ENCODE measurements at regions of chr11 and their contacts with region 1.

Region 1: GRCh38 chr11:19071255-19071654 is 10.7 kb upstream of the MRGPRX2 start:
- DNase-seq: peak; percentile 81 to 88 (median 86)
- ATAC-seq: peak; percentile 96
- H3K4me3 ChIP-seq: no peak overlapping the region
- H3K27ac ChIP-seq: no peak overlapping the region
- H3K4me1 ChIP-seq: no peaks in the 10 kb centered on the region; a peak in 1 of 5 replicates
- H3K27me3 ChIP-seq: no peaks in the 10 kb centered on the region
- CTCF ChIP-seq: peak; percentile 99 to 100 (median 99)
- EP300 ChIP-seq: no peak
- POLR2A ChIP-seq: no peak
- RAD21 ChIP-seq: peak; percentile 95 to 98

Region 2: DNA sequence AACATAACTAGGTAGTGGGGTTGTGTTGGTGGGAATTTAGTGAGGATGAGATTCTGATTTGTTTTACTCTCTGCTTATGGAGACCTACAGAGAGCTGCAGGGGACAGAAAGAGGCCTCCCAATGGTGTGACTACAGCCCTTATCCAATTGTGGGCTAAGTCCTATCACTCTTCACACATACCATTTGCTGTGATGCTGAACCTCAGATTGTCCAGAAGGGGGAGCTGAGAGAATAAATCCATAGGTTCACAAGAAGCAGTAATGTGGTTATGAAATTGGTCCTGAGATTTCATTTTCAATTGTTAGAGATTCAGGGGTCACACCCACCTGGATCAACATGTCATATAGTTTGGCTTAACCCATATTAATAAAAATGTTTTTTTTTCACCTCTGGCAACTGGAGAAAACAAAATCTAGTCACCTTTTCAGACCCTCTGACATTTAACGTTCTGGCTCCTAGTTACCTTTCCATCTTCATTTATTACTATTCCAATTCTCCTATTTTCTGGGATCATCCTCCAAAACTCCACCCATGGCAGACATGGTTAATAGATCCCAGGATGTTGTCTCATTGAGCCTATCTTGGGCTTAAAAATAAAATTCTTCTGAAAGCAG is 226.4 kb before region 1 on chr11:
- CTCF ChIA-PET with region 1: no interaction called
- POLR2A ChIA-PET with region 1: no interaction called
- in situ Hi-C with region 1: no loop called
- intact Hi-C with region 1: loop called (anchors 10 kb)
- DNase-seq: peak; percentile 32 to 48 (median 45)
- ATAC-seq: peak; percentile 93
- H3K4me3 ChIP-seq: no peak overlapping the region
- H3K27ac ChIP-seq: no peak overlapping the region
- H3K4me1 ChIP-seq: no peaks in the 10 kb centered on the region
- H3K27me3 ChIP-seq: no peaks in the 10 kb centered on the region
- CTCF ChIP-seq: peak; percentile 41 to 71 (median 66); a peak in 5 of 6 replicates
- EP300 ChIP-seq: no peak
- POLR2A ChIP-seq: no peak
- RAD21 ChIP-seq: peak; percentile 21 to 61; a peak in 3 of 4 replicates

Region 3: GRCh38 chr11:19040051-19040450 is 31.2 kb before region 1 on chr11:
- CTCF ChIA-PET with region 1: no interaction called
- POLR2A ChIA-PET with region 1: no interaction called
- in situ Hi-C with region 1: no loop called
- intact Hi-C with region 1: no loop called
- DNase-seq: no peak
- ATAC-seq: no peak
- H3K4me3 ChIP-seq: no peak overlapping the region
- H3K27ac ChIP-seq: no peak overlapping the region
- H3K4me1 ChIP-seq: no peaks in the 10 kb centered on the region
- H3K27me3 ChIP-seq: no peaks in the 10 kb centered on the region
- CTCF ChIP-seq: no peak
- EP300 ChIP-seq: no peak
- POLR2A ChIP-seq: no peak
- RAD21 ChIP-seq: no peak

Region 4: GRCh38 chr11:19173004-19173689 is 101.9 kb after region 1 on chr11:
- CTCF ChIA-PET with region 1: no interaction called
- POLR2A ChIA-PET with region 1: no interaction called
- in situ Hi-C with region 1: no loop called
- intact Hi-C with region 1: no loop called
- DNase-seq: peak in 2 of 4 experiments; percentile 35 to 54
- ATAC-seq: peak; percentile 76
- H3K4me3 ChIP-seq: no peak overlapping the region
- H3K27ac ChIP-seq: peak overlapping the region; percentile 19; the same call in 1 of the 3 replicates
- H3K4me1 ChIP-seq: peaks cover 0 to 20% of the 10 kb centered on the region in 2 experiments; a peak in 2 of 5 replicates
- H3K27me3 ChIP-seq: no peaks in the 10 kb centered on the region
- CTCF ChIP-seq: no peak
- EP300 ChIP-seq: no peak
- POLR2A ChIP-seq: no peak
- RAD21 ChIP-seq: 0 out of 4 replicates have a peak, but pooled peaks of 1 of the 2 experiments have one; percentile 6

Region 5: DNA sequence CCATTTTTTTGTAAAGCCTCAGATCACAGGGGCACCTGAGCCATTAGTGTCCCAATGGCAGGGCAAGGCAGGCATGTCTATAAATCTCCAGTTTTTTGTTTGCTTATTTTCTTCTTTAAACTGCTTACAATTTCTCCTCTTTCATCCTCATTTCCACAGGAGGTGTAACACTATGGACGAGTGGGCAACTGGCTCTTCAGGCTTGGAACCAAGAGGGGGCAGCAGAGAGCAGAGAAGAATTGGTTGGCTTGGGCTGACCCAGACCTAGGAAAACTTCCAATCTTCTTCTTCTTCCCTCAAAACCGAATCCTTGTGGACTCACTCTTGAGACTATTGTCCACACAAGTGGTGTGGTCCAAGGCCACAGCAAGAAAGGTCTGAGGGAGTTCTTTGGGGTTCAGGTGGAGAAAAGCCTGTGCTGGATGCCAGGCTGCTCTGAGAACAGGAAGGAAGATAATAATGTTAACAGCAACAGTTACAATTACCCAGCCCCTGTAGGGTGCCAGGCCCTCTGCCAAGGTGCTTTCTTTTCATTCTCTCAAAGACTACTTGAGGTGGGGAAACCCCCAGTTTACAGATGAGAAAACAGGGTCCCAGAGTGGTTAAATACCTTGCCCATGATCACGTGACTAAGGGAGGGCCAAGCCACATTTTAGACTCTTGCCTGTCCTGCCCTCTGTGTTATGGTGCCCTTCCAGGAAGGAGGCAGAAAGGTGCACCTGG is 240.2 kb after region 1 on chr11:
- CTCF ChIA-PET with region 1: no interaction called
- POLR2A ChIA-PET with region 1: no interaction called
- in situ Hi-C with region 1: loop called (anchors 5 kb)
- intact Hi-C with region 1: loop called (anchors 5 kb)
- DNase-seq: peak; percentile 62 to 68 (median 64)
- ATAC-seq: peak; percentile 98
- H3K4me3 ChIP-seq: no peak overlapping the region
- H3K27ac ChIP-seq: no peak overlapping the region
- H3K4me1 ChIP-seq: no peaks in the 10 kb centered on the region
- H3K27me3 ChIP-seq: peaks cover 9 to 35% of the 10 kb centered on the region in 2 experiments; a peak in 4 of 5 replicates
- CTCF ChIP-seq: peak; percentile 73 to 80 (median 74)
- EP300 ChIP-seq: no peak
- POLR2A ChIP-seq: no peak
- RAD21 ChIP-seq: peak; percentile 41 to 69

Region 6: GRCh38 chr11:19561011-19561410 is 489.8 kb after region 1 on chr11:
- CTCF ChIA-PET with region 1: interaction called, 17 read pairs
- POLR2A ChIA-PET with region 1: no interaction called
- in situ Hi-C with region 1: loop called (anchors 10 kb)
- intact Hi-C with region 1: no loop called
- DNase-seq: no peak
- ATAC-seq: no peak
- H3K4me3 ChIP-seq: no peak overlapping the region
- H3K27ac ChIP-seq: no peak overlapping the region
- H3K4me1 ChIP-seq: peaks cover 0 to 5% of the 10 kb centered on the region in 2 experiments; a peak in 1 of 5 replicates
- H3K27me3 ChIP-seq: peaks cover 0 to 17% of the 10 kb centered on the region in 2 experiments; a peak in 2 of 5 replicates
- CTCF ChIP-seq: no peak
- EP300 ChIP-seq: no peak
- POLR2A ChIP-seq: no peak
- RAD21 ChIP-seq: no peak

Region 7: DNA sequence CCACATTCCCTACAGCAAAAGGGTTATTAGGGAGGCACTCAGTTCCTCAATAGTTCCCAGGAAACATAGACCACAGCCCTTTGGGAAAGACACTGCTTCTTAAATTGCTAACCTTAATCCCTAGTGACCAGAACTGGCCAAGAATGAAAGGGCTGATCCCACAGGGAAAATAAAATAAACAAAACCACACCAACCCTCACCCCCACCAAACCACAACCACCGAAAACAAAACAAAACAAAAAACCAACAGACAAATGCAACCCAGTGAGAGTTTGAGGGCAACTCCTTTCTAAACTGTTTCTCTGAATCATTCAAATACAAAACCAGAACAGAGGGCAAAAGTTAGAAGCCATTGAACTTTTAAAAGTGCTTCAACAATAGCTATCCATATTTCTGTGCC is 698.6 kb after region 1 on chr11:
- CTCF ChIA-PET with region 1: no interaction called
- POLR2A ChIA-PET with region 1: no interaction called
- in situ Hi-C with region 1: loop called (anchors 25 kb)
- intact Hi-C with region 1: no loop called
- DNase-seq: no peak
- ATAC-seq: no peak
- H3K4me3 ChIP-seq: no peak overlapping the region
- H3K27ac ChIP-seq: no peak overlapping the region
- H3K4me1 ChIP-seq: no peaks in the 10 kb centered on the region
- H3K27me3 ChIP-seq: peaks cover 0 to 6% of the 10 kb centered on the region in 2 experiments; a peak in 1 of 5 replicates
- CTCF ChIP-seq: no peak
- EP300 ChIP-seq: no peak
- POLR2A ChIP-seq: no peak
- RAD21 ChIP-seq: no peak

Measured in K562 (cell line).